MCF 10A (cell line): ENCODE measurements at regions of chr1 and their contacts with region 1.

Region 1: DNA sequence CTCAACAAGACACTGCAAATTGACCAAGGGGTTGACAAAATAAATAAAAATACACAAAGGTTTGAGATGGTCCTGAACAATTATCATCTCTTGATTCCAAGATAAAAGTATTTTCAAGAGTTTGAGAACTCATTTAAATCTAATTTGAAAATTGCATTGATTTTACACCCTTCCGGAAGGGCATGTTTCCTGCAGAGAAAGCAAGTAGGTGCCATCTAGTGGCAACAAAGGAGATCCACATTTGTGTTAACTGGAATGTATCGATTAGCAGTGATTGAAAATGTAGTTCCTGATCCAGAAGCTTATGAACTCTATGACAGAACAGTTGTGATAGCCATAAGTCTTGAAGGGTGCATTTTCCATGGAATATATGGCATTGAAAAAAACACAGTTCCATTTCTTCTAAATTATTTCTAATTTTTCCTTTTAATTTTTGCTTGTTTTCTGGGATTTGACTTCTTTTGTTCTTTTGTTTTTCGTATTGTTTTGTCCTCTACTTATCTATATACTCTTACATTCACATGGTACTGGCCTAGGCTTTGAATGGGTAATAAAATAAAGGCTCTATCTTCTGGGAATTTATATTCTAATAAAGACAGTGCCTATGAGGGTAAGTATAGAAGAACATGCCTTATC is 143.7 kb downstream of the DNM3 start:
- DNase-seq: peak; percentile 52
- H3K4me3 Mint-ChIP-seq: no peak overlapping the region
- H3K27ac Mint-ChIP-seq: no peak overlapping the region
- H3K4me1 Mint-ChIP-seq: no peaks in the 10 kb centered on the region
- H3K27me3 Mint-ChIP-seq: no peaks in the 10 kb centered on the region
- CTCF ChIP-seq: peak; percentile 85

Region 2: GRCh38 chr1:171741872-171742576 is 242.9 kb before region 1 on chr1 and contains the start of gene VAMP4:
- CTCF ChIA-PET with region 1: interaction called, 17 read pairs
- POLR2A ChIA-PET with region 1: interaction called, 4 read pairs
- intact Hi-C with region 1: loop called (anchors 1 kb)
- DNase-seq: peak; percentile 89
- H3K4me3 Mint-ChIP-seq: peak within 1 kb of the TSS; percentile 87
- H3K27ac Mint-ChIP-seq: peak within 1 kb of the TSS; percentile 98
- H3K4me1 Mint-ChIP-seq: peaks cover 45% of the 10 kb centered on the region
- H3K27me3 Mint-ChIP-seq: no peaks in the 10 kb centered on the region
- CTCF ChIP-seq: no peak
- total RNA-seq, gene VAMP4: 20.2 and 21.1 TPM in 2 replicates

Region 3: DNA sequence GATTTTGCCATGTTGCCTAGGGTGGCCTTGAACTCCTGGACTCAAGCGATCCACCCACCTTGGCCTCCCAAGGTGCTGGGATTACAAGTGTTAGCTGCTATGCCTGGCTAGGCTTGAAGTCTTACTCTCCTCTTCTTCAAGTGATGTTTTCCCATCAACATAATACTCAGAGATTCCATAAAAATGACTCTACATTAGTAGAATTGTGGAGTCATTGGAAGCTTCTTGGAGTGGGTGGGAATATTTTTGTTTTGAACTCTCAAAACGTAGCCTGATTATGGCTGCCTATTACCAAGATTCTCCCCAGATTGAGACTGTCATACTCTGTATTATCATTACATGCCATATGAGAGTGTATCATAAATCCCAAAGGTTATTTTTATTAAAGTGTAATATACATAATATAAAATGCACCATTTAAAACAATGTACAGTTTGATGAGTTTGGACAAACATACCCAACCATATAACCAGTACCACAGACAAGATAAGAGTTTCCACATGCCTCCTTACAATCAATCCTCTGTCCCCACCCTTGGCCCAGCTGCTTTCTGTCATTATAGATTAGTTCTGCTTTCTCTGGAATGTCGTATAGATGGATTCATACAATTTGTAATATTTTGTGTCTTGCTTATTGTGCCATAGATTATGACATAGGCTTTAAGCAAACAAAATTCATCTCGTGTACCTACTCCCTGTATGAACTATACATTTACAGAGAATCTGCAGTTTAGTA is 151.7 kb before region 1 on chr1:
- CTCF ChIA-PET with region 1: interaction called, 16 read pairs
- POLR2A ChIA-PET with region 1: no interaction called
- intact Hi-C with region 1: no loop called
- DNase-seq: no peak
- H3K4me3 Mint-ChIP-seq: no peak overlapping the region
- H3K27ac Mint-ChIP-seq: no peak overlapping the region
- H3K4me1 Mint-ChIP-seq: no peaks in the 10 kb centered on the region
- H3K27me3 Mint-ChIP-seq: no peaks in the 10 kb centered on the region
- CTCF ChIP-seq: no peak

Region 4: DNA sequence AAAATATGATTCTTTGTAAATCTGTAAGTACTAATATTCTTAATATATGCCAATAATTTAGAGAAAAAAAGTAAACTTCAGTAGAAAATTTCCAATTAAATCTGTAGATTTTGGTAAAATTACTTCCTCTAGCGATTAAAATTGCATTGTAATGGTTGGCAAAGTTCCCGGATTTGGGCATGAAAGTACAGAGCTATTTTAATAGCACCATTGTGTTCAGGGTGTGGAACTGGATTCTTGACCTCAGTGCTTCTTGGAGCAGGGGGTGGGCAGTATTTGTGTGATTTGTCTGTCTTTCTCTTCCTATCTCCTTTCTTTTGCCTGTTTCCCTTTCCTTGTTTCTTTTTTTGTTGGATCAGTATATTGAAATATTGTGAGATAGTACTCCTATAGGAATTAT is 71.6 kb before region 1 on chr1:
- CTCF ChIA-PET with region 1: interaction called, 39 read pairs
- POLR2A ChIA-PET with region 1: no interaction called
- intact Hi-C with region 1: no loop called
- DNase-seq: peak; percentile 86
- H3K4me3 Mint-ChIP-seq: no peak overlapping the region
- H3K27ac Mint-ChIP-seq: no peak overlapping the region
- H3K4me1 Mint-ChIP-seq: no peaks in the 10 kb centered on the region
- H3K27me3 Mint-ChIP-seq: no peaks in the 10 kb centered on the region
- CTCF ChIP-seq: no peak

Region 5: GRCh38 chr1:172398970-172399755 is 414.2 kb after region 1 on chr1:
- CTCF ChIA-PET with region 1: interaction called, 26 read pairs
- POLR2A ChIA-PET with region 1: no interaction called
- intact Hi-C with region 1: loop called (anchors 1 kb)
- DNase-seq: peak; percentile 67
- H3K4me3 Mint-ChIP-seq: peak overlapping the region; percentile 26
- H3K27ac Mint-ChIP-seq: peak overlapping the region; percentile 21
- H3K4me1 Mint-ChIP-seq: peaks cover 33% of the 10 kb centered on the region
- H3K27me3 Mint-ChIP-seq: no peaks in the 10 kb centered on the region
- CTCF ChIP-seq: peak; percentile 77